MCF 10A (cell line): ENCODE measurements at regions of chr3 and their contacts with region 1.

Region 1: GRCh38 chr3:88003115-88003755 is 55.6 kb downstream of the CGGBP1 start:
- DNase-seq: peak; percentile 68
- H3K4me3 Mint-ChIP-seq: no peak overlapping the region
- H3K27ac Mint-ChIP-seq: no peak overlapping the region
- H3K4me1 Mint-ChIP-seq: no peaks in the 10 kb centered on the region
- H3K27me3 Mint-ChIP-seq: no peaks in the 10 kb centered on the region
- CTCF ChIP-seq: peak; percentile 69

Region 2: DNA sequence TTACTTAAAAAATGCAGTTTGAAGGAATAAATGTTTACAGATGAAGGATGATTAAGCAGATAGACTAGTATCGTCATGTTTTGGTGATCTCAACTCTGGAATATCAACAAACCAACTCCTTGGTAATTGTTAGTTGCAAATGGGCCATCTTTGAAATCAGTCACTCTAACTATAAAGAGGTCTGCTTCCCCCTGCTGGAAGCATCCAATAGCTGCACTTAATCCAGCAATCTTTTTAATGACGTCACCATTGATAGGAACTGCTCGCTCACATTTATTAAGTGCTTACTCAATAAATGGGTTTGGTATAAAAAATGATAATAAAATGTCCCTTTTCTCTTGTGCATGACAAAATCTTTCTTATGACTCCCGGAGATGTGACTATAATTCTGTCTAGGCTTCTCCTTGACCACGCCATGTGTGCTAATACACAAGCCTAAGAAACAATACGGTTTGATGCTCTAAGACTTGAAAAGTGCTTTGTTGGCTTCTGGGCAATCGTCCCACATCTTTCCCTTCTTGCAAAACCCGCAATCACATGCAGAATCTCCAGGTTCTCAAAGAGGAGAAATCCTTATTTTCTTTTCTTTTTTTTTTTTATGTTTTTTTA is 499.2 kb before region 1 on chr3:
- CTCF ChIA-PET with region 1: interaction called, 6 read pairs
- POLR2A ChIA-PET with region 1: no interaction called
- intact Hi-C with region 1: loop called (anchors 1 kb)
- DNase-seq: peak; percentile 81
- H3K4me3 Mint-ChIP-seq: no peak overlapping the region
- H3K27ac Mint-ChIP-seq: no peak overlapping the region
- H3K4me1 Mint-ChIP-seq: no peaks in the 10 kb centered on the region
- H3K27me3 Mint-ChIP-seq: no peaks in the 10 kb centered on the region
- CTCF ChIP-seq: peak; percentile 70

Region 3: GRCh38 chr3:87742250-87742649 is 261.0 kb before region 1 on chr3:
- CTCF ChIA-PET with region 1: no interaction called
- POLR2A ChIA-PET with region 1: no interaction called
- intact Hi-C with region 1: no loop called
- DNase-seq: no peak
- H3K4me3 Mint-ChIP-seq: no peak overlapping the region
- H3K27ac Mint-ChIP-seq: no peak overlapping the region
- H3K4me1 Mint-ChIP-seq: peaks cover 7% of the 10 kb centered on the region
- H3K27me3 Mint-ChIP-seq: no peaks in the 10 kb centered on the region
- CTCF ChIP-seq: no peak

Region 4: GRCh38 chr3:87771341-87772192 is 231.7 kb before region 1 on chr3:
- CTCF ChIA-PET with region 1: no interaction called
- POLR2A ChIA-PET with region 1: no interaction called
- intact Hi-C with region 1: loop called (anchors 1 kb)
- DNase-seq: peak; percentile 39
- H3K4me3 Mint-ChIP-seq: no peak overlapping the region
- H3K27ac Mint-ChIP-seq: no peak overlapping the region
- H3K4me1 Mint-ChIP-seq: no peaks in the 10 kb centered on the region
- H3K27me3 Mint-ChIP-seq: no peaks in the 10 kb centered on the region
- CTCF ChIP-seq: peak; percentile 41